PC-3 (cell line): ENCODE measurements at regions of chr1 and their contacts with region 1.

Region 1: GRCh38 chr1:32413507-32414185 is 19.4 kb upstream of the BSDC1 start:
- DNase-seq: peak; percentile 88
- ATAC-seq: peak; percentile 92
- H3K4me3 ChIP-seq: no peak overlapping the region
- H3K27ac ChIP-seq: no peak overlapping the region
- H3K4me1 ChIP-seq: no peaks in the 10 kb centered on the region
- H3K27me3 ChIP-seq: no peaks in the 10 kb centered on the region
- CTCF ChIP-seq: peak; percentile 89

Region 2: DNA sequence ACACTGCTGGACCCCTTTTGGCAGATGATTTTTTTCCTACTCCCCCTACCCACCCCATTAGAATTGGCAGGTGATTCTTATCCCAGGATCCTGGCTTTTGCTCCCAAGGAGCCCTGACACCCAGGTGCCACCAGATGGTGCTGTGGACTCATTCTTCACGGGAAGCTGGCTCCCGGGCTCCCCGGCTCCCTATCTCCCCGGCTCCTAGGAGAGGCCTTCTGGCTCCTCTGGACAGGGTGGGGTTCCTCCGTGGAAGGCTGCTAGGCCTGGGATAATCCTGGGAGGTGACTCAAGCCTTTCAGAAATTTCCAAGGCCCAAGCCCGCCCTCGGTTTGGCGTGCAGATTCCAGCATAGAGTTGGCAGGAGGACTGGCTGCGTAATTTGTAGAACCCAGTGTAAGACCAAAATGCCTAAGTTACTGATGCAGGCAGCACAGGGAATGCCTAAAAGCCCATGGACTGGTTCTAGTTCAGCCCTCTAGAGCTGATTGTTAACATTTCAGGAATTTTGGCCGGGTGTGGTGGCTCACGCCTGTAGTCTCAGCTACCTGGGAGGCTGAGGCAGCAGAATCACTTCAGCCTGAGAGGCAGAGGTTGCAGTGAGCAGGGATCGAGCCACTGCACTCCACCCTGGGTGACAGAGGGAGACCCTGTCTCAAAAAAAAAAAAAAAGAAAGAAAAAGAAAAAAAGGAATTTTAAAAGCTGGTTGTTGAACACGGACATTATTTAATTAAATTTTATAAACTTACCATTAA is 12.6 kb before region 1 on chr1:
- CTCF ChIA-PET with region 1: interaction called, 4 read pairs
- POLR2A ChIA-PET with region 1: no interaction called
- intact Hi-C with region 1: loop called (anchors 1 kb)
- DNase-seq: peak; percentile 84
- ATAC-seq: peak; percentile 99
- H3K4me3 ChIP-seq: no peak overlapping the region
- H3K27ac ChIP-seq: no peak overlapping the region
- H3K4me1 ChIP-seq: peaks cover 4% of the 10 kb centered on the region; the same call in 1 of the 2 replicates
- H3K27me3 ChIP-seq: no peaks in the 10 kb centered on the region
- CTCF ChIP-seq: peak; percentile 94